Activated B cell treated with CpG ODN at 0.5 μM for 24 hours (primary cell): ENCODE measurements at regions of chr17 and their contacts with region 1.

Region 1: GRCh38 chr17:82297714-82298537 is 19.5 kb downstream of the CD7 start:
- DNase-seq: peak; percentile 81
- ATAC-seq: peak; percentile 75
- H3K4me3 Mint-ChIP-seq: peak overlapping the region; percentile 97
- H3K27ac Mint-ChIP-seq: peak overlapping the region; percentile 100
- H3K4me1 Mint-ChIP-seq: peaks cover 76% of the 10 kb centered on the region
- H3K27me3 Mint-ChIP-seq: no peaks in the 10 kb centered on the region
- CTCF ChIP-seq: no peak

Region 2: DNA sequence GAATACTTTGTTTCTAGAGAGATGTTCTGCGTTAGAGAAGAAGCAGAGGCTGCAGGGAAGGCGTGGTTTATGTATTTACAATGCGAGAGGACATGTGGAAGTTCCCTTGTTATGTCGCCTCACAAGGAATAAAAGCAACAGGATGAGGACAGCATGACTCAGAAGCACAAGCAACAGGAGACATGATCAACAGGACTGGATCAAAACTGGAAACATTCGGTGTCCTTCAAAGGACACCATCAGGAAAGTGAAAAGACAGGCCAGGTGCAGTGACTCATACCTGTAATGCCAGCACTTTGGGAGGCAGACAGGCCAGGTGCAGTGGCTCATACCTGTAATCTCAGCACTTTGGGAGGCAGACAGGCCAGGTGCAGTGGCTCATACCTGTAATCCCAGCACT is 137.9 kb before region 1 on chr17:
- CTCF ChIA-PET with region 1: no interaction called
- POLR2A ChIA-PET with region 1: no interaction called
- intact Hi-C with region 1: no loop called
- DNase-seq: no peak
- ATAC-seq: no peak
- H3K4me3 Mint-ChIP-seq: no peak overlapping the region
- H3K27ac Mint-ChIP-seq: no peak overlapping the region
- H3K4me1 Mint-ChIP-seq: no peaks in the 10 kb centered on the region
- H3K27me3 Mint-ChIP-seq: no peaks in the 10 kb centered on the region
- CTCF ChIP-seq: no peak

Region 3: DNA sequence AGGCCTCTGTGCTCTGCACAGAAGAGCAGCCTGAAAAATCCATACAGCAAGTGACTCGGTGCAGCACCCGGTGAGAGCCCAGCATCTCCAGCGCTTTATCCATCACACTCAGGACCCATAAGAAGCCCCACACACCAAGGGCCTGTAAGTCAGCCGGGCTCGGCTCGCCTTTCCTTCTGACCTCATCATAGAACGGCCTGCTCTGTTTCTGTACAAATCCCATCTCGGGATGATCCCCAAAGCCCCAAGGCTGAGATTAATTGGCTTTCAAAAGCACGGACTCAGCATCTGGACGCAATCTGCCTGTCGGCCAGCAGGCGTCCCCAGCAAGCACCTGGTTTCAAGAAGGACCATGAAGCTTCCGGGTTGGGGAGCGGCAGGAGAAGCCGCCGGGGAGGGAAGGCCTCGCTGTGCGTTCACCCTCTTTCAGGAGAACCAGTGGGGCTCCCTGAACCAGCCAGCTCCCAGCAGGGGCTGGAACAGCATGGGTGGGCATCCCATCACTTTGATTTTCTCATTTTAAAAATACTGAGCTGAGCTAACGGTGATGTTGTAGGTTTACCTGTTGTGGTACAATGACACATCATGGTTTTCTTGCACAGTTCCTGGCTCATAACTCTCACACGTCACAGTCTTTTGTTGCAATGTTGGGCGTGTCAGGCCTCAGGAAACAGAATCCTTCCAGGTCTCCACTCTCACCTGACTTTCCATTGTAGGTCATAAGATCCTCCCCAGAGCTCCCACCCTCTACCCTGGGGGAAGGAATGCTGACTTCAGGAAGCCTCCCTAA is 92.0 kb before region 1 on chr17:
- CTCF ChIA-PET with region 1: interaction called, 10 read pairs
- POLR2A ChIA-PET with region 1: interaction called, 28 read pairs
- intact Hi-C with region 1: no loop called
- DNase-seq: peak; percentile 71
- ATAC-seq: peak; percentile 99
- H3K4me3 Mint-ChIP-seq: peak overlapping the region; percentile 44
- H3K27ac Mint-ChIP-seq: peak overlapping the region; percentile 86
- H3K4me1 Mint-ChIP-seq: peaks cover 15% of the 10 kb centered on the region
- H3K27me3 Mint-ChIP-seq: no peaks in the 10 kb centered on the region
- CTCF ChIP-seq: peak; percentile 31

Region 4: GRCh38 chr17:82230627-82231311 is 67.2 kb before region 1 on chr17:
- CTCF ChIA-PET with region 1: interaction called, 12 read pairs
- POLR2A ChIA-PET with region 1: interaction called, 27 read pairs
- intact Hi-C with region 1: loop called (anchors 2 kb)
- DNase-seq: peak; percentile 68
- ATAC-seq: peak; percentile 49
- H3K4me3 Mint-ChIP-seq: peak overlapping the region; percentile 78
- H3K27ac Mint-ChIP-seq: no peak overlapping the region
- H3K4me1 Mint-ChIP-seq: peaks cover 33% of the 10 kb centered on the region
- H3K27me3 Mint-ChIP-seq: no peaks in the 10 kb centered on the region
- CTCF ChIP-seq: no peak

Region 5: DNA sequence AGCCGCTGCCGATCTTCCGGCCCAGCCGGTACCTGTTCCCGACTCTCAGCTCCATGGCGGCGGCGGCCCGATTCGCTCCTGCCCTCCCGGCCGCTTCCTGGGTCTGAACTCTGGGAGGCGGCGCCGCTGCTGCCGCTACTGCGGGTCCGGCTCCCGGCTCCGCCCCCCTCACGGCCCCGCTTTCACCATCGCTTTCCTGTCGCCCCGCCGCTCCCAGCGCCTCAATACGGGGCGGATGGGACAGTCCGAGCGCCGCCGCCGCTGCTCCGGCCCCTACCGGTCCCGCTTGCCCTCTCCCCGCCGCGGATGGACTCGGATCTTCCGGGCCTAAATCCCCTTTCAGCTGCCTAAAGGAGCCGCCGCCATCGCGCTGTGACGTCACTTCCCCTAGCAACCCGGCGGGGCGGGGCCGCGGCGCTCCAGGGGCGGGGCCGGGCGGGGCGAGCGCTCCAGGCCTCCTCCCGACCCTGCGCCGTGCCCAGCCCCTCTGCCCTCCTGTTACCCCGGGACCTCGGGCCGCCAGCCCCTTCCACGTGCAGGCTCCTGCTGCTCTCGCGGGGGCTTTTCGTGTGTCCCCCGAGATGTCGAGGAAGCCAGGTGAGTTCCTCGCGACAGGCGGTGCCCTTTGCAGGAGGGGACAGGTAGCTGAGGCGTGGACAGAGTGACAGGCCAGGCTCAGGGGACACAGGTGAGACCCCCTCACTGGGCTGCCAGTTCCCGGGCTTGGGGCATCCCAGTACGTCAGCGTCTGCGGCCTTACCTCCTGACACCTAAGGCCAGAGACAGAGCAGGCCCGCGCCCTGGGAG is 24.4 kb before region 1 on chr17 and contains the start of gene CSNK1D:
- CTCF ChIA-PET with region 1: no interaction called
- POLR2A ChIA-PET with region 1: interaction called, 100 read pairs
- intact Hi-C with region 1: loop called (anchors 1 kb)
- DNase-seq: peak; percentile 97
- ATAC-seq: peak; percentile 83
- H3K4me3 Mint-ChIP-seq: peak within 1 kb of the TSS; percentile 94
- H3K27ac Mint-ChIP-seq: peak within 1 kb of the TSS; percentile 97
- H3K4me1 Mint-ChIP-seq: peaks cover 45% of the 10 kb centered on the region
- H3K27me3 Mint-ChIP-seq: no peaks in the 10 kb centered on the region
- CTCF ChIP-seq: no peak
- total RNA-seq, gene CSNK1D: 147 and 170 TPM in 2 replicates

Region 6: DNA sequence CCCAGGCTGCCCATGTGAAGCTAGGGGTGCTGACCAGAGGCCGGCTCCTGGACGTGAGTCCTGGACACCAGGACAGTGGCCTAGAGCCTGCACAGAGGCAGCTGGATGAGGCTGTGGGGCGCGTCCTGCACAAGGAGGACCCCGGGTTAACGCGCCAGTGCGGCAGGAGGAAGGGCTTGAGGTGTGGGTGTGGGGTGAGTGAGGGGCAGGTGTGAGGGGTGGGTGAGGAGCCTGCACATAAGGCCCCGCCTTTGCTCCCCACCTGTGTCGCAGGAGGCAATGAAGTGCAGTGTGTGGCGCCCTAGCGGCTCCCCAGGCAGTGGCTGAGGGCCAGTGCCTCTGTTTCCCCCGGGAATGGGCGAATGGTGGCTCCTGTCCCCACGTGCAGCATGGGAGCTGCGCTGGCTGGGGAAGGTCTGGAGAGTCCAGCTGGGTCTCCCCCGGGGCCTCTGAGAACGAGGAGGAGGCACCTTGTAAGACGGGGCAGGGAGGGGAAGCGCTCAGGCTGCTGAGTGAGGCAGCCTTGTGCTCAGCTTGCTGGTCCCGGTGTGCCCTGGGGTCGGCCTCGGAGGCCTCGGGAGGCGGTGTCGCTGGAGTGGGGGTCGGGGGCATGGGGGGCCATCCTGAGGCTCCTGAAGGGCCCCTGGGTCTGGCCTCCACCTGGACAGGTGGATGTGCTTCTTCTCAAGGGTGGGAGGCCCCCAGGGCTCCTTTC is 16.2 kb after region 1 on chr17:
- CTCF ChIA-PET with region 1: interaction called, 5 read pairs
- POLR2A ChIA-PET with region 1: interaction called, 15 read pairs
- intact Hi-C with region 1: no loop called
- DNase-seq: no peak
- ATAC-seq: peak; percentile 31
- H3K4me3 Mint-ChIP-seq: no peak overlapping the region
- H3K27ac Mint-ChIP-seq: no peak overlapping the region
- H3K4me1 Mint-ChIP-seq: peaks cover 18% of the 10 kb centered on the region
- H3K27me3 Mint-ChIP-seq: peaks cover 23% of the 10 kb centered on the region
- CTCF ChIP-seq: no peak

Region 7: GRCh38 chr17:82332669-82333278 is 34.8 kb after region 1 on chr17:
- CTCF ChIA-PET with region 1: no interaction called
- POLR2A ChIA-PET with region 1: interaction called, 19 read pairs
- intact Hi-C with region 1: no loop called
- DNase-seq: no peak
- ATAC-seq: peak; percentile 72
- H3K4me3 Mint-ChIP-seq: peak overlapping the region; percentile 71
- H3K27ac Mint-ChIP-seq: no peak overlapping the region
- H3K4me1 Mint-ChIP-seq: peaks cover 28% of the 10 kb centered on the region
- H3K27me3 Mint-ChIP-seq: peaks cover 13% of the 10 kb centered on the region
- CTCF ChIP-seq: no peak

Region 8: GRCh38 chr17:82380860-82381702 is 83.2 kb after region 1 on chr17:
- CTCF ChIA-PET with region 1: no interaction called
- POLR2A ChIA-PET with region 1: no interaction called
- intact Hi-C with region 1: no loop called
- DNase-seq: no peak
- ATAC-seq: no peak
- H3K4me3 Mint-ChIP-seq: no peak overlapping the region
- H3K27ac Mint-ChIP-seq: no peak overlapping the region
- H3K4me1 Mint-ChIP-seq: no peaks in the 10 kb centered on the region
- H3K27me3 Mint-ChIP-seq: peaks cover 21% of the 10 kb centered on the region
- CTCF ChIP-seq: no peak